AG04450 (cell line): ENCODE measurements at regions of chr3 and their contacts with region 1.

Region 1: GRCh38 chr3:158727206-158728060 is 4.8 kb downstream of the RARRES1 start:
- DNase-seq: no peak
- H3K4me3 ChIP-seq: no peak overlapping the region
- H3K27ac ChIP-seq: no peak overlapping the region
- H3K27me3 ChIP-seq: no peaks in the 10 kb centered on the region
- CTCF ChIP-seq: peak; percentile 80

Region 2: GRCh38 chr3:158644345-158644908 is 83.0 kb before region 1 on chr3 and contains the start of gene GFM1:
- CTCF ChIA-PET with region 1: interaction called, 16 read pairs
- POLR2A ChIA-PET with region 1: no interaction called
- DNase-seq: peak; percentile 86
- H3K4me3 ChIP-seq: peak within 1 kb of the TSS; percentile 92
- H3K27ac ChIP-seq: peak within 1 kb of the TSS; percentile 87
- H3K27me3 ChIP-seq: no peaks in the 10 kb centered on the region
- CTCF ChIP-seq: peak; percentile 94
- polyA plus RNA-seq, gene GFM1: 18.9 and 22.2 TPM in 2 replicates

Region 3: DNA sequence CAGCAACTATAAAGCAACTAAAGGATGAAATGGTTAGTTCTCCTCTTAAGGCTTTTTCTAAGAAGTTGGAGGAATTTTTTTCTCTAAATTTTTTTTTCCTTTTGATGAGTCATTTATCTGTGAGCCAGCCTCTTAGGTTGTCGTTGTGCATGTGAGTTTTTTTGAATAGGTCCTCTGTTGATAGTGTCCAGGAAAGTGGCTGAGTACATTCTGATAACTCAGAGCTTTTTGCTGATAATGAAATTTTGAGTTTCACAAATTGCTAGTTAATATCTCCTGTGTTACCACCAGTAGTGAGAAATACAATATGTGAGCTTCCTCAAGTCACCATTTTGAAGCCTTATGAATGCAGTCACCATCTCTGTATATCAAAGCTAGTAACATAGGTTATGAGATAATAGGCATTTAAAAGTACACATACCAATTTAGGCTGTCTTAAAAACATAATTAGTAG is 47.9 kb before region 1 on chr3:
- CTCF ChIA-PET with region 1: interaction called, 15 read pairs
- POLR2A ChIA-PET with region 1: interaction called, 4 read pairs
- DNase-seq: no peak
- H3K4me3 ChIP-seq: no peak overlapping the region
- H3K27ac ChIP-seq: no peak overlapping the region
- H3K27me3 ChIP-seq: no peaks in the 10 kb centered on the region
- CTCF ChIP-seq: no peak

Region 4: DNA sequence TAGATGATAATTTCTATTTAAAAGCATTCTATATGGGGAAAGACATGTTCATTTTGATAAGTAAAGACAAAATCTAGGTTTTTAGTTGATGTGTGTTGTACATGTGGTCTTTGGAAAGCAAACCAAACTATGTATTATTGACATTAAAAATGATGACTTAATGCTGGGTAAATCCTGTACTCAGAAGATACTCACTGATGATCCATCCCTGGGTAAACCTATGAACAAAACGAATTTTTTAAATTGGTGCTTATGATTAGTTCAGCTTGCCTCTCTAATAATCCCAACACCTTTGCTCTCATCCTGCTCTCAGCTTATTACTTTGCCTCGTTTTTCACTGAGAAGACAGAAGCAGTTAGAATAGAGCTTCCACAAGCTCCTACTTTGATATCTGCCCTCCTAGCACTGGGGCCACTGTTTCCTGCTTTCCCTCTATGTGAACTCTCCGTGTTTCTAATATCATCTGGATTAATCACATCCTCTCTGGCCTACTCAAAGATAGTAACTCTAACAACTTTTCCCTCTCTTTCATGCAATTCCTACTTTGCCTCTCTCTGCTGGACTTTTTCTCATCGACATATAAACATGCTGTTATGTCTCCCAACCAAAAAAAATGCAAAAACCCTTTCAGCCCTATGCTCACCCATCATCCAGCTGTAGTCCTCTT is 24.5 kb before region 1 on chr3:
- CTCF ChIA-PET with region 1: interaction called, 38 read pairs
- POLR2A ChIA-PET with region 1: interaction called, 3 read pairs
- DNase-seq: no peak
- H3K4me3 ChIP-seq: no peak overlapping the region
- H3K27ac ChIP-seq: peak overlapping the region; percentile 89
- H3K27me3 ChIP-seq: no peaks in the 10 kb centered on the region
- CTCF ChIP-seq: no peak

Region 5: DNA sequence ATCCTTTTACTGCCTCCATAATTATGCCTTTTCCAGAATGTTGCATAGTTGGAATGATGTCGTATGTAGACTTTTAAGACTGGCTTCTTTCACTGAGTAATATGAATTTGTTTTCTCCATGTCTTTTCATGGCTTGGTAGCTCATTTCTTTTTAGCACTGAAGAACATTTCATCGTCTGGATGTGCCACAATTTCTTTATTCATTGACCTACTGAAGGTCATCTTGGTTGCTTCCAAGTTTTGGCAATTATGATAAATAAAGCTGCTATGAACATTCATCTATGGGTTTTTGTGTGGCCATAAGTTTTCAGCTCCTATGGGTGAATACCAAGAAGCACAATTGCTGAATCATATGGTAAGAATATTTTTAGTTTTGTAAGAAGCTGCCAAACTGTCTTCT is 28.0 kb after region 1 on chr3:
- CTCF ChIA-PET with region 1: interaction called, 15 read pairs
- POLR2A ChIA-PET with region 1: no interaction called
- DNase-seq: no peak
- H3K4me3 ChIP-seq: no peak overlapping the region
- H3K27ac ChIP-seq: no peak overlapping the region
- H3K27me3 ChIP-seq: no peaks in the 10 kb centered on the region
- CTCF ChIP-seq: no peak

Region 6: DNA sequence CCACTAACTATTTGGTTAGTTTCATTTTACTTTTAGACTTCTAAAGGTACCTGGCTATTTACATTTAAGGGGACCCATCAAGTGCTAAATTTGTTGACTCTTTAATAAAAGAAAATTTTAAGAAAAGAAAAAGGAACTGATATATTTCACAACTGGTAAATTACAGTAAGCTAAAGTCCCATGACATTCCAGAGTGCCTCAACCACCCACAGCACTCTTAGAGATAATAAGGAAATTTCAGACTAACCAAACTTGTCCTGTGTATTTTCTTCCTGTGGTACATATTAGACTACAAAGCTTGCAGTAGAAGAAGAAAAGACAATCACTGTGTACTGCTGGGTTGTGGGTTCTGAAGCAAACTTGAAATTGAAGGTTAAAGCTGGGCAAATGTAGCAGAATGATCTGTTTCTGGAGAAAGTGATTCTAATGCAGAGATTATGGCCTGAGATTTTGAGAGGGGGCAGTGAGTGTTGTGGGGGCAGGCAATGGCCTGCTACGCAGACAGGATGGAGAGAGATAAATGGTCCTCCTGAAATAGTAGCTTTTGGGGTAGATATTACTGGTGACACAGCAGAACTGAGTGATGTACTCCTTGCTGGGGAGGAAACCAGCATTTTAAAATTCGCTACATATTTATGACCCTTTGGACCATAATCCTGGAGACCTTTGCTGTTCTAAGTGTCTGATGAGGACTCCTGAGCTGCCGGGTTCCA is 49.9 kb after region 1 on chr3:
- CTCF ChIA-PET with region 1: interaction called, 16 read pairs
- POLR2A ChIA-PET with region 1: no interaction called
- DNase-seq: no peak
- H3K4me3 ChIP-seq: no peak overlapping the region
- H3K27ac ChIP-seq: no peak overlapping the region
- H3K27me3 ChIP-seq: no peaks in the 10 kb centered on the region
- CTCF ChIP-seq: no peak

Region 7: GRCh38 chr3:158801696-158802408 is 74.4 kb after region 1 on chr3 and contains the start of gene MFSD1:
- CTCF ChIA-PET with region 1: interaction called, 14 read pairs
- POLR2A ChIA-PET with region 1: no interaction called
- DNase-seq: peak; percentile 67
- H3K4me3 ChIP-seq: peak within 1 kb of the TSS; percentile 79
- H3K27ac ChIP-seq: peak within 1 kb of the TSS; percentile 74
- H3K27me3 ChIP-seq: no peaks in the 10 kb centered on the region
- CTCF ChIP-seq: no peak
- polyA plus RNA-seq, gene MFSD1: 69.6 and 89.9 TPM in 2 replicates